PC-9 (cell line): ENCODE measurements at regions of chr7 and their contacts with region 1.

Region 1: GRCh38 chr7:135672560-135673359 is 10.4 kb downstream of the STMP1 start:
- DNase-seq: peak in 1 of 2 experiments; percentile 38
- H3K4me3 ChIP-seq: no peak overlapping the region
- H3K27ac ChIP-seq: peak overlapping the region; percentile 2; the same call in 1 of the 2 replicates
- H3K4me1 ChIP-seq: peaks cover 8% of the 10 kb centered on the region
- H3K27me3 ChIP-seq: no peaks in the 10 kb centered on the region
- CTCF ChIP-seq: peak; percentile 95

Region 2: DNA sequence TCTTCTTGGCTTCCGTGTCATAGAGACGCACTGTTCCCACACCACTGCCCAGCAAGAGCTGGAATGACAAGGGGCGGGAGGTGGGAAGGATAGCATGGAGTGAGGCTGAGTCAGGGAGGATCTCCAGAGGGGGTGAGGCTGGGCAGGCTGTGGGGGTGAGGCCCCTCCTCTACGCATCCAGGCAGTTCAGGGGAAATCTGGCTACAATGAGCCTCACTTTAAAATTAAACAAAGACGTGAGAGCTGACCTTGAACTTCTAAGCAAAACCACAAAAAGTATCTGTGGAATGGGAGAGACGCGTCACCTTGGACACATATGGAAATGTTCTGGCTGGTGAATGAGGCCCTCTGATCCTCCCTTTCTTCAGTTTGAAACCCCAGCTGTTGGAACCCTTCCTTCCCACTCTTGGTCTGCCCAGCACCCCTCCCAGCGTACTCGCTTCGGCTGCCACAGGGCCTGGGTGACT is 479.1 kb before region 1 on chr7:
- CTCF ChIA-PET with region 1: no interaction called
- POLR2A ChIA-PET with region 1: no interaction called
- intact Hi-C with region 1: no loop called
- DNase-seq: no peak
- H3K4me3 ChIP-seq: no peak overlapping the region
- H3K27ac ChIP-seq: no peak overlapping the region
- H3K4me1 ChIP-seq: no peaks in the 10 kb centered on the region
- H3K27me3 ChIP-seq: no peaks in the 10 kb centered on the region
- CTCF ChIP-seq: no peak

Region 3: GRCh38 chr7:135634191-135634878 is 38.4 kb before region 1 on chr7:
- CTCF ChIA-PET with region 1: no interaction called
- POLR2A ChIA-PET with region 1: no interaction called
- intact Hi-C with region 1: no loop called
- DNase-seq: no peak
- H3K4me3 ChIP-seq: no peak overlapping the region
- H3K27ac ChIP-seq: no peak overlapping the region
- H3K4me1 ChIP-seq: no peaks in the 10 kb centered on the region
- H3K27me3 ChIP-seq: no peaks in the 10 kb centered on the region
- CTCF ChIP-seq: no peak

Region 4: DNA sequence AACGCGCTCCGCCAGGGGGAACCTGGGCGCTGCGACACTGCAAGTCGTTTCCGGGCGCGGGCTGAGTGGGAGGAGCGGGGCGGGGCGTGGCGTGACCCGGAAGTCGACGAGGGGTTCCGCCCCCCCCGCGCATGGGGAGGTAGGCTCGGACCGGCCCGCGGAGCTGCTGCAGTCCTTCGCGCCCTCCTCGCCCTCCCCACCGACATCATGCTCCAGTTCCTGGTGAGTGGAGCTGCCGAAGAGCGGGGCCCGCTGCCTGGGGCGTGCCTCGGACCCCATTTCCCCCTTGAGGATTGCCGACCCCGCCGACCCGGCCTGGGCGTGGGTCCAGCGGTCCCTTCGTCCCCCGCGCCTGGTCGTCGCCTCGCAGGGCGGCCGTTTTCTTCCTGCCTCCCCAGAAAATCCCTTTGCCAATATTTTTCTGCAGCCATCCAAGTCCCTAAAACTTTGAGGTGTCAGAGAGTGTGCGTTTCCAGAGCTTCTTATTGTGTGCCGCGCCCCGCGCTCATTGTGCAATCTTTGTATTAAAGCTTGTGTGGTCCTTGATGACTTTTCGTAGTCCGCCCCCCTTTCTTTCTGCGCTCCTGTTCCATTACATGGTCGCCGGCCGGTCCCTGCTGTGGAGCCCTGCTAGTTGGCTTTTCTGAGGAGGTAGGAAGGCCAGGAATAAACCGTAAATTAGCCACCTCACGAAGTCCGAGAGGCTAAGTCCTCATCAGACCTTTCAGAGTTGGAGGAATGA is 10.2 kb before region 1 on chr7 and contains the start of gene STMP1:
- CTCF ChIA-PET with region 1: interaction called, 12 read pairs
- POLR2A ChIA-PET with region 1: interaction called, 3 read pairs
- intact Hi-C with region 1: no loop called
- DNase-seq: peak; percentile 83 to 97
- H3K4me3 ChIP-seq: peak within 1 kb of the TSS; percentile 99
- H3K27ac ChIP-seq: peak within 1 kb of the TSS; percentile 92
- H3K4me1 ChIP-seq: peaks cover 16% of the 10 kb centered on the region
- H3K27me3 ChIP-seq: no peaks in the 10 kb centered on the region
- CTCF ChIP-seq: peak; percentile 89
- total RNA-seq, gene STMP1: 60.4 and 77.0 TPM in 2 replicates

Region 5: DNA sequence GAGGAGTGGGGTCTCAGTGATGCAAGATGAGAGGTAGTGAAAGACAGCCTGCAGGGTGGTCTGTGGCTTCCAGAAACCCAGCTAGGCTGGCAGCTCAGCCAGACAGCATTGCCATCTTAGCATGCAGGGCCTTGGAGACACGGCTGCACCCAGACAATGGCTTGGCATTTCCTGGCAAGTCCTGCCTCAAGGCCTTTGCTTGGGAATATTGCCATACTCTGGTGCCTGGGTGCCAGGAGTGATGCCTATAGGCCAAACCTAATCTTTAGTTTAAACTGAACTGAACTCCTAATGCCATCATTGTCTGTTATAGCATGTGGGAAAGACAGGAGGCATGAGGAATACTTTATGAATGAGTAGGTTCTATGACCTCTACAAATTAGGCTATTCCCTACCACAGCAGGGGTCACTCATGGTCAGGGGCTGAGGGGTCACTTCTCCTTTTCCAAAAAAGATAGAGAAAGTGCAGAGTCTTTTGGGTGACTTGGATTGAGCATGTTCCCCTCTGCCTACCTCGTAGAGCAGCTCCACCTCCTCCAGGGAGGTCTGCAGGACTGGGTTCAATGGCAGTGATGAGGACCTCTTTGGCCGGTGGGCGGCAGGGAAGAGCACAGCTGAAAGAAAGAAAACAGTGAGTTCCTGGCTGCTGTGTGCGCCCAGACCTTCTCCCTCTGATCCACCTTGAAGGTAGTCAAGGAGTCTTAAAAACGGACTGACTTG is 64.0 kb after region 1 on chr7:
- CTCF ChIA-PET with region 1: interaction called, 19 read pairs
- POLR2A ChIA-PET with region 1: no interaction called
- intact Hi-C with region 1: no loop called
- DNase-seq: no peak
- H3K4me3 ChIP-seq: no peak overlapping the region
- H3K27ac ChIP-seq: no peak overlapping the region
- H3K4me1 ChIP-seq: no peaks in the 10 kb centered on the region
- H3K27me3 ChIP-seq: no peaks in the 10 kb centered on the region
- CTCF ChIP-seq: no peak; the same call in 1 of the 2 replicates

Region 6: GRCh38 chr7:135877805-135878204 is 205.0 kb after region 1 on chr7:
- CTCF ChIA-PET with region 1: interaction called, 4 read pairs
- POLR2A ChIA-PET with region 1: no interaction called
- intact Hi-C with region 1: loop called (anchors 5 kb)
- DNase-seq: peak; percentile 84 to 95
- H3K4me3 ChIP-seq: peak overlapping the region; percentile 0; the same call in 1 of the 2 replicates
- H3K27ac ChIP-seq: peak overlapping the region; percentile 37
- H3K4me1 ChIP-seq: peaks cover 31% of the 10 kb centered on the region
- H3K27me3 ChIP-seq: no peaks in the 10 kb centered on the region
- CTCF ChIP-seq: no peak

Region 7: GRCh38 chr7:136399385-136399784 is 726.6 kb after region 1 on chr7:
- CTCF ChIA-PET with region 1: no interaction called
- POLR2A ChIA-PET with region 1: no interaction called
- intact Hi-C with region 1: loop called (anchors 10 kb)
- DNase-seq: no peak
- H3K4me3 ChIP-seq: no peak overlapping the region
- H3K27ac ChIP-seq: no peak overlapping the region
- H3K4me1 ChIP-seq: no peaks in the 10 kb centered on the region
- H3K27me3 ChIP-seq: no peaks in the 10 kb centered on the region
- CTCF ChIP-seq: no peak